ENCODE measurements at regions of chr3 and their contacts with region 1.

Region 1: DNA sequence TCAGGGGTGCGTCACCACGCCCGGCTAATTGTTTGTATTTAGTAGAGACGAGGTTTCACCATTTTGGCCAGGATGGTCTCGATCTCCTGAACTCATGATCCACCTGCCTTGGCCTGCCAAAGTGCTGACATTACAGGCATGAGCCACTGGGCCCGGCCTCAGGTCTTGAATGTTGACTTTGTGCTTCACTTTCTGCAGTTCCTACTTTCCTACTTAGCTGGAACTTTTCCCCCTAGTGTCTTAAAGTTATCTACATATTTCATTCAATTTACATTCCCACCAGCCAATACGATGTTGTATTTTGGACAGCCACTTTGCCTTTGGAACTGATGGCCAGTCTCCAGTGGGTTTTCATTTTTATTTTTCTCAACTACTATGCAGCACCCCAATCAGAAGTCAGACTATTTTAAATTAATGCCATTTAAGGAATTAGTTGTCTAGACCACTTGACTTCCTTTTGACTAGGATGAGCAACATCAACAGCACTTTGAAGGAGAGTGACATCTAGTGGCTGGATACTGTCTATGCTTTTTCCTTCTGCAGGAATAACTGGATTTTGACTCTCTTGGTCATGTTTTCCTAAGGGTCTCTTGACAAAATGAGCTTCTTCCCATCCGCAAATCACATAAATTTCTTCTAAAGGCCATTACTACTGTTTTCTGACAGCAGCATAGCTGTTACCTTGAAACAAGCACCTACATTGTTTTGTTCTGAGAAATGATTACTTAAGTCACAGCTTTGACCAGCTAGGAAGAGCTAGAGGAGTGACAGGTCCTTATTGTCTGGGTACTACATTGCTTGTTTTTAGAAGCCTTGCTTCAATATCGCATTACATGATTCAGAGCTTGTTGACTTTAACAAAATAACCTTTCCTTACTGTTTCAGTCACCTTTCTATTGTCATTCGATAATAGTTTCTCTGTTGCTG is 140.2 kb downstream of the ITPR1 start:
- DNase-seq: no peak
- ATAC-seq: peak; percentile 60
- H3K4me3 Mint-ChIP-seq: no peak overlapping the region
- H3K27ac Mint-ChIP-seq: peak overlapping the region; percentile 64
- H3K4me1 Mint-ChIP-seq: peaks cover 9% of the 10 kb centered on the region
- H3K27me3 Mint-ChIP-seq: no peaks in the 10 kb centered on the region
- CTCF ChIP-seq: peak; percentile 19

Region 2: GRCh38 chr3:4350789-4351163 is 282.6 kb before region 1 on chr3:
- CTCF ChIA-PET with region 1: interaction called, 149 read pairs
- POLR2A ChIA-PET with region 1: interaction called, 7 read pairs
- intact Hi-C with region 1: loop called (anchors 1 kb)
- DNase-seq: no peak
- ATAC-seq: peak; percentile 88
- H3K4me3 Mint-ChIP-seq: peak overlapping the region; percentile 44
- H3K27ac Mint-ChIP-seq: peak overlapping the region; percentile 8
- H3K4me1 Mint-ChIP-seq: peaks cover 9% of the 10 kb centered on the region
- H3K27me3 Mint-ChIP-seq: no peaks in the 10 kb centered on the region
- CTCF ChIP-seq: peak; percentile 26

Region 3: DNA sequence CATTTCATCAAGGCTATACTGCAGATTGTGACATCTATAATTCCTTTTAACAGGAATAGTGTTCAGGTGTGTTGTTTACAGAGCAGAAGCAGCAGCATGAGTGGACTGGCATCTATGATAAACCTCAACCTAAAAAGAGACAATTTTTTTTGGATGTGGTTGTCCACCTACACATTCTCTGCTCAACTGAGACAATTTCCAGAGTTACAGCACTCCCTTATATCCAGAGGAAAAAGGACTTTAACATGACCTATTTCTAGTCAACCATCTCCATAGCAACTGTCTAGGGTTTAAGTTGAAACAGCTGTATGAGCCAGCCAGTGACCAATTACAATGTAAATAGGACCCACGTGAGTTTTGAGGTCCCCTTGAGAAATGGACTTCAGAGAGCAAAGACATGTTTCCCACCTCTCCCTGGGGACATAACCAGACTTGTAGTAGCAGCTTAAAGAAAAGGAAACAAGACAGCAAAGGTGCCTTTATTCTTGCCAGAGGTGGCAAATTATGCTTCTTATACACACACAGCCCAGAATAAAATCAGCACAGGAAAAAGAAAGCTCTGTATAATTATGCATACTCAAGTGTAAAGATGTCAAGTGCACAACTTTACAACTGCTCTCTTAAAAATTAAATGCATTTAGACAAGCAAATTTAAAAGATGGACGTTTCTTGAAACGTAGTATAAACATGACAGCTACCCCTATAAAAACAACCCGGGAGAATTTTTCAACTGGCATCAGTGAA is 206.6 kb before region 1 on chr3:
- CTCF ChIA-PET with region 1: interaction called, 6 read pairs
- POLR2A ChIA-PET with region 1: no interaction called
- intact Hi-C with region 1: loop called (anchors 5 kb)
- DNase-seq: no peak
- ATAC-seq: peak; percentile 58
- H3K4me3 Mint-ChIP-seq: no peak overlapping the region
- H3K27ac Mint-ChIP-seq: peak overlapping the region; percentile 57
- H3K4me1 Mint-ChIP-seq: peaks cover 21% of the 10 kb centered on the region
- H3K27me3 Mint-ChIP-seq: no peaks in the 10 kb centered on the region
- CTCF ChIP-seq: no peak

Region 4: GRCh38 chr3:4466741-4467521 is 166.4 kb before region 1 on chr3 and contains the start of gene SUMF1:
- CTCF ChIA-PET with region 1: interaction called, 8 read pairs
- POLR2A ChIA-PET with region 1: no interaction called
- intact Hi-C with region 1: loop called (anchors 1 kb)
- DNase-seq: peak; percentile 70
- ATAC-seq: peak; percentile 94
- H3K4me3 Mint-ChIP-seq: peak within 1 kb of the TSS; percentile 93
- H3K27ac Mint-ChIP-seq: peak within 1 kb of the TSS; percentile 96
- H3K4me1 Mint-ChIP-seq: peaks cover 16% of the 10 kb centered on the region
- H3K27me3 Mint-ChIP-seq: no peaks in the 10 kb centered on the region
- CTCF ChIP-seq: no peak
- total RNA-seq, gene SUMF1: 18.4 and 20.7 TPM in 2 replicates

Region 5: DNA sequence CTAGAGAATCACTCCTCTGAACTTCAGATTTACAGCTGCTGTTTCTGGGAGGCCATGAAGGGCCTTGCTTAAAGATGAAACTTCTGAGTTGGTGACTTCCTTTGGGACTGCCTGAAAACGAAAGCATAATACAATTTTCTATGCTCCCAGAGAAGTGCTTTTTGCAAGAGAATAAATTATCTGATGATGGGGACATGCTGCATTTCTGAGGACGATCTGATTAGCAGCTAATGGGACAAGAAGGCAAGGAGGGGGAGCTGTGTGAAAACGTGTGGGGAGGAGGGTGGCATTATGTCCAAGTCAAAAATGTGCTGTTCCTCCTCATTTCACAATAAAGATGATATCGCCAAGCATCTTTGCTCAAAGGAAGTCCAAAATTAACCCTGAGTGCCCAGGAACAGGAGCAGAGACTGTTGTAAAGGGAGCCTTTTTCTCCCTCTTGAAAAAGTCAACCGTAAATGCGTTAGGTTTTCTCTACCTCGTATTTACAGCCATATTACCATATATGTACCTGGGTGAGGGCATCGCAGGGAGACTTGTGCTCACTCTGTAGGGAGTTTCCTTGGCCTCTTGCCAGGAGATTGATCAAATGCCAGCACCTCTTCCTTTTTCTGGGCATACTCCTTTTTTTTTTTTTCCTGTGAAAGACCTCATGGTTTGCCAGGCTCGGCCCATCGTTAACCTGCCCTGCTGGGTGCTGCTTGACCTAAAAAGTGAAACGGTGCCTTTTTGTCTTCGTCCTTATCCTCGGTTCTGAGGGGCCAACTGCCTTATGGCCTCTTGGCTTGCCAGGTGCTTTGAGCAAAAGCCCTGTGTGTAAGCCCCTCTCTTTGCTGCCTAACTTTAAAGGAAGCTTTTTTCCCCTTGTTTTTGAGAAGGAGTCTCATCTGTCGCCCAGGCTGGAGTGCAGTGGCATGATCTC is 128.7 kb before region 1 on chr3:
- CTCF ChIA-PET with region 1: interaction called, 4 read pairs
- POLR2A ChIA-PET with region 1: no interaction called
- intact Hi-C with region 1: loop called (anchors 1 kb)
- DNase-seq: no peak
- ATAC-seq: peak; percentile 27
- H3K4me3 Mint-ChIP-seq: peak overlapping the region; percentile 80
- H3K27ac Mint-ChIP-seq: peak overlapping the region; percentile 87
- H3K4me1 Mint-ChIP-seq: peaks cover 89% of the 10 kb centered on the region
- H3K27me3 Mint-ChIP-seq: no peaks in the 10 kb centered on the region
- CTCF ChIP-seq: no peak

Region 6: GRCh38 chr3:4524088-4525023 is 109.0 kb before region 1 on chr3:
- CTCF ChIA-PET with region 1: interaction called, 13 read pairs
- POLR2A ChIA-PET with region 1: no interaction called
- intact Hi-C with region 1: loop called (anchors 1 kb)
- DNase-seq: no peak
- ATAC-seq: no peak
- H3K4me3 Mint-ChIP-seq: no peak overlapping the region
- H3K27ac Mint-ChIP-seq: no peak overlapping the region
- H3K4me1 Mint-ChIP-seq: peaks cover 66% of the 10 kb centered on the region
- H3K27me3 Mint-ChIP-seq: no peaks in the 10 kb centered on the region
- CTCF ChIP-seq: no peak

Region 7: DNA sequence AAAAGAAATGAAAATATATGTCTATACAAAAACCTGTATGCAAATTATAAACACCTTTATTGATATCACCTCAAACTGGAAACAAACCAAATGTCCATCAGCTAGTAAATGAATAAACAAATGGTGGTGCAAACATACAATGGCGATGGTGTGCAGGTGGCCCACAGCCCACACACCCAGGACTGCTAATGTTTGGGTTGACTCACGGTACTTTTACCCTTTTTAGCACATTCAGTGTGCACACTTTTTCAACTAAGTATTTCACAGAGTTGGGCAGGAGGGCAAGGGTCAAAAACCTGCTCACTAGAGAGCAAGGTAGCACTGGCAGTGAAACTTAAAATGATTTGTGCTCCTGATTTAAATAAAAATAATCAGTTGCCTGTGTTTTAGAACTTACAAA is 222.8 kb after region 1 on chr3:
- CTCF ChIA-PET with region 1: no interaction called
- POLR2A ChIA-PET with region 1: no interaction called
- intact Hi-C with region 1: no loop called
- DNase-seq: no peak
- ATAC-seq: no peak
- H3K4me3 Mint-ChIP-seq: no peak overlapping the region
- H3K27ac Mint-ChIP-seq: no peak overlapping the region
- H3K4me1 Mint-ChIP-seq: peaks cover 24% of the 10 kb centered on the region
- H3K27me3 Mint-ChIP-seq: no peaks in the 10 kb centered on the region
- CTCF ChIP-seq: no peak